Activated CD4-positive, alpha-beta T cell treated with anti-CD3 and anti-CD28 coated beads for 36 hours (primary cell): ENCODE measurements at regions of chr19 and their contacts with region 1.

Region 1: GRCh38 chr19:46788262-46788967 is at the start of gene SLC1A5:
- DNase-seq: peak; percentile 99
- ATAC-seq: peak; percentile 81
- H3K4me3 Mint-ChIP-seq: peak within 1 kb of the TSS; percentile 94
- H3K27ac Mint-ChIP-seq: peak within 1 kb of the TSS; percentile 94
- H3K4me1 Mint-ChIP-seq: peaks cover 38% of the 10 kb centered on the region
- H3K27me3 Mint-ChIP-seq: no peaks in the 10 kb centered on the region
- total RNA-seq, gene SLC1A5: 200 to 227 TPM

Region 2: GRCh38 chr19:46346821-46347571 is 441.4 kb before region 1 on chr19 and contains the start of gene PPP5C:
- CTCF ChIA-PET with region 1: no interaction called
- POLR2A ChIA-PET with region 1: no interaction called
- intact Hi-C with region 1: loop called in 1 of 2 experiments (anchors 1 kb)
- DNase-seq: peak; percentile 94
- ATAC-seq: peak; percentile 74
- H3K4me3 Mint-ChIP-seq: peak within 1 kb of the TSS; percentile 90
- H3K27ac Mint-ChIP-seq: peak within 1 kb of the TSS; percentile 91
- H3K4me1 Mint-ChIP-seq: peaks cover 41% of the 10 kb centered on the region
- H3K27me3 Mint-ChIP-seq: no peaks in the 10 kb centered on the region
- total RNA-seq, gene PPP5C: 100.0 to 129 TPM

Region 3: DNA sequence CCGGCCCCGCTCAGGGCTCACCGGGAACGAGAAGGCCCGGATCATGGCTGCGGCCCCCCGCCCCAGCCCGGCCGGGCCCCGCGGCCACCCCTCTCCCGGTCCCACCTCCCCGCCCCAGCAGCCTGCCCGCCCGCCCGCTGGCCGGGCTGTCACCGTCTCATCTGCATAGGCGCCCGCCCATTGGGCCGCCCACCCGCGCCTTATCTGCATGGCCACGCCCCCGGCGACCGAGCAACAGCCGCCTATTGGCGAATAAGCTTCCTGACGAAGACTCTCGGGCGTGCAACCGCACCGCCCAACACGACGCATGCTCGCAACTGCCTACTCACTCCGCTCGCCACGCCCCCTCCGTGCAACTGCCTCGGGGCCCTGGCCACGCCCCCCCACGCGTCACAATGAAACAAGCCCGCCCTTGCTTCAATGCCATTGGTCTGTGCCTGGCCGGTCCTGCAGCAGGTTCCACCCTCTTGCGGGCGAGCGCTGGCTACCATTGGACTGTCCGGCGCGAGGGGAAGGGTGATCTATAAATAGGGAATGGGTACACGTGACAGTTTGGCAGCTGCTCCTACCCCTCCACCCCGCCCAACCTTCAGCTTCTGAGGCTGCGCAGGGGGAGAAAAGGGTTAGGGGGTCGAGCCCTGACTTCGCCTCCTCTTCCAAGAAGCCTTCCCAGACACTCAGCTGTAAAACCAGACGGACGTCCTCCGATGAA is 127.2 kb before region 1 on chr19 and contains the start of gene DACT3:
- CTCF ChIA-PET with region 1: no interaction called
- POLR2A ChIA-PET with region 1: no interaction called
- intact Hi-C with region 1: loop called in 1 of 2 experiments (anchors 1 kb)
- DNase-seq: peak; percentile 100
- ATAC-seq: peak; percentile 87
- H3K4me3 Mint-ChIP-seq: peak within 1 kb of the TSS; percentile 66
- H3K27ac Mint-ChIP-seq: peak within 1 kb of the TSS; percentile 62
- H3K4me1 Mint-ChIP-seq: peaks cover 28% of the 10 kb centered on the region
- H3K27me3 Mint-ChIP-seq: peaks cover 12% of the 10 kb centered on the region
- total RNA-seq, gene DACT3: 2.9 to 3.1 TPM

Region 4: GRCh38 chr19:46766569-46767317 is 21.7 kb before region 1 on chr19:
- CTCF ChIA-PET with region 1: interaction called, 17 read pairs
- POLR2A ChIA-PET with region 1: interaction called, 6 read pairs
- intact Hi-C with region 1: no loop called
- DNase-seq: peak; percentile 78
- ATAC-seq: peak; percentile 92
- H3K4me3 Mint-ChIP-seq: no peak overlapping the region
- H3K27ac Mint-ChIP-seq: no peak overlapping the region
- H3K4me1 Mint-ChIP-seq: no peaks in the 10 kb centered on the region
- H3K27me3 Mint-ChIP-seq: no peaks in the 10 kb centered on the region

Region 5: DNA sequence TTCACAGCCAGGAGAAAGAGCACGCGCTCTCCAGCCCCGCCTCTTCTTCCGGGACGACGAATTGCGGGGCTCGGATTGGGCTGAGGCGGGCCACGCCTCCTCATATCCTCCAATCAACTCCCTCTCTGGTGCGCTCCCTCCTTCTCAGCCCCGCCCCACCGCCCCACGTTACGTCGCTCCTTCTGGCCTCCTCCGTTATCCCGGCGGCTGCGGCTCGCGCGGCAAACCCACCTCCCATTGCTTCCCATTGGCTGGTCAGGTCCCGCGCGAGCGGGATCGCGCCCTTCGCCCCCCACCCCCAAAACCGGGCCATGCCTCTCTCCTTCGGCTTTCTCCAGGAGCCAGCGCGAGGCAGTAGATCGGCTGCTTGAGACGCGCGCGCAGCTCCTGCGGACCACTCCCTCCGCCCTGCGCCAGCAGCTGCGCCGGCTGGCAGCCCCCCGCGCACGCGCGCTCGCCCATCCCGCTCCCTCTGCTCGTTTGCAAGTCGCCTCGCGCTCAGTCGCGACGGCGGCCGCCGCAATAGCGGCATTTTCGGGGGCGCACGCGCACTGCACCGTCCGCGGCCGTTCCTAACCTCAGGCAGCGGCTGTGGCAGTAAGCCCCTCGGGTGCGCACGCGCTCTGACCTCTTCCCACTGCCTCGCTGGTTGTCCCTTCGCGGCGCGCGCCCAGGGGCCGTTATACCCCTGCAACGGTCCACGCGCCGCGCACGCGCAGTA is 71.9 kb after region 1 on chr19:
- CTCF ChIA-PET with region 1: interaction called, 3 read pairs
- POLR2A ChIA-PET with region 1: interaction called, 3 read pairs
- intact Hi-C with region 1: loop called (anchors 1 kb)
- DNase-seq: peak; percentile 99
- ATAC-seq: peak; percentile 82
- H3K4me3 Mint-ChIP-seq: no peak overlapping the region
- H3K27ac Mint-ChIP-seq: peak overlapping the region; percentile 78
- H3K4me1 Mint-ChIP-seq: peaks cover 25% of the 10 kb centered on the region
- H3K27me3 Mint-ChIP-seq: no peaks in the 10 kb centered on the region

Region 6: DNA sequence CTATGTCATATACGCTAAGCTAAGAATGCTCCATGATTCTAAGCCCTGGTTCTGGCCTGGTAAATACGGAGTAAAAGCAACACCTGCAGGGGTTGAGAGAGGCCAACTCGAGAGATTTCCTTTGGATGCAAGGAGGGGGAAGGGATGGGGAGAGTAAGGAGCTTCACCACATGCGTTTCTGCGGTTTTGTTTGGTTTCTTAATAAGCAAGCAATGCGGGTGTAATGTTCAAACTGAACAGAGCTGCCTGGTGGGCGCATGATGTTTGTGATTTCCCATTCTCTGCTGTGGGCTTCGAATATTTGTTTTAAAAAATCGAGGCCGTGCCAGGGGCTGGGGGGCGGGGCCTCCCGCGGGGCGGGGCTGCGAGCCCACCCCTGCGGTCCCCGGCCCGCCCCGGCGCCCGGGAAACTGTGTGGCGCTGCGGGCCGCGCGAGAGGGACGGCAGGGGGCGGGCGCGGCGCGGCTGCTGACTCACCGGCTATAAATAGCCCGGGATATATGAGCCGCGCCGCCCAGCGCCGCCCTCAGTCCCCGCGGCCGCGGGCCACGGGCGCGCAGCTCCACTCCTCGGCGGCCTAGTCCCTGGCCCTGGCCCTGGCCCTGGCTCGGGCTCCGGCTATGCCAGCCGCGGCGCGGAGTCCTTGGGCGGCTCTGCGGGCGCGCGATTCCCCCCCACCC is 437.5 kb after region 1 on chr19:
- CTCF ChIA-PET with region 1: no interaction called
- POLR2A ChIA-PET with region 1: interaction called, 3 read pairs
- intact Hi-C with region 1: loop called in 1 of 2 experiments (anchors 1 kb)
- DNase-seq: peak; percentile 93
- ATAC-seq: peak; percentile 70
- H3K4me3 Mint-ChIP-seq: peak overlapping the region; percentile 77
- H3K27ac Mint-ChIP-seq: no peak overlapping the region
- H3K4me1 Mint-ChIP-seq: peaks cover 16% of the 10 kb centered on the region
- H3K27me3 Mint-ChIP-seq: no peaks in the 10 kb centered on the region

Region 7: GRCh38 chr19:47348819-47349795 is 560.7 kb after region 1 on chr19 and contains the start of gene DHX34:
- CTCF ChIA-PET with region 1: no interaction called
- POLR2A ChIA-PET with region 1: no interaction called
- intact Hi-C with region 1: loop called in 1 of 2 experiments (anchors 5 kb)
- DNase-seq: peak; percentile 99
- ATAC-seq: peak; percentile 98
- H3K4me3 Mint-ChIP-seq: peak within 1 kb of the TSS; percentile 92
- H3K27ac Mint-ChIP-seq: peak within 1 kb of the TSS; percentile 94
- H3K4me1 Mint-ChIP-seq: peaks cover 35% of the 10 kb centered on the region
- H3K27me3 Mint-ChIP-seq: no peaks in the 10 kb centered on the region
- total RNA-seq, gene DHX34: 15.4 to 17.9 TPM